CD8-positive, alpha-beta T cell (primary cell): ENCODE measurements at regions of chr9 and their contacts with region 1.

Region 1: GRCh38 chr9:69035438-69036308 is at the start of gene FXN:
- DNase-seq: peak; percentile 64 to 90 (median 80)
- ATAC-seq: peak; percentile 87
- H3K4me3 ChIP-seq: peak within 1 kb of the TSS; percentile 51 to 81
- H3K4me3 Mint-ChIP-seq: peak within 1 kb of the TSS; percentile 97
- H3K27ac ChIP-seq: peak within 1 kb of the TSS; percentile 35 to 67
- H3K27ac Mint-ChIP-seq: peak within 1 kb of the TSS; percentile 92
- H3K4me1 ChIP-seq: peaks cover 14% of the 10 kb centered on the region
- H3K4me1 Mint-ChIP-seq: peaks cover 28% of the 10 kb centered on the region
- H3K27me3 ChIP-seq: no peaks in the 10 kb centered on the region
- H3K27me3 Mint-ChIP-seq: no peaks in the 10 kb centered on the region
- CTCF ChIP-seq: peak; percentile 96
- total RNA-seq, gene FXN: 9.7 to 13.1 TPM

Region 2: DNA sequence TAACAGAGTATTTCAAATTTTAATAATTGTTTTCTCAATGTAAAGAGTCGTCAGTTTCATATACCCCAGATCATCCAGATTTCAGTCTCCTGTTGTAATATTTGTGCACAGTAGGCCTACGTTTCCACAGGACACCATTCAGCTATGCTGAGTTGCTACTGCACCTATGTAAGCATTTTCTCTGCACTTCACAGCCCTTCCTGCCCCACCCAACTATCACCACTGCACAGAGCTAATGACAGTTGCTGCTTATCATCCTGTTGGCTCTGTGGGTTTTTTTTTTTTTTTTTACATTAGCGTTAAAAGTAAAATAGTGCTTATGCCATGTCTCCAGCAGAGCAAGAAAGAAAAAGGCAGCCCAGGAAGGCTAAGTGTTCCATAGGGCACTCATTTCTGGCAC is 15.9 kb before region 1 on chr9:
- CTCF ChIA-PET with region 1: interaction called, 14 read pairs
- POLR2A ChIA-PET with region 1: interaction called, 8 read pairs
- intact Hi-C with region 1: no loop called
- DNase-seq: peak in 8 of 9 experiments; percentile 17 to 72 (median 42)
- ATAC-seq: peak; percentile 93
- H3K4me3 ChIP-seq: no peak overlapping the region
- H3K4me3 Mint-ChIP-seq: peak overlapping the region; percentile 42
- H3K27ac ChIP-seq: no peak overlapping the region
- H3K27ac Mint-ChIP-seq: no peak overlapping the region
- H3K4me1 ChIP-seq: peaks cover 22% of the 10 kb centered on the region
- H3K4me1 Mint-ChIP-seq: peaks cover 19% of the 10 kb centered on the region
- H3K27me3 ChIP-seq: no peaks in the 10 kb centered on the region
- H3K27me3 Mint-ChIP-seq: no peaks in the 10 kb centered on the region
- CTCF ChIP-seq: no peak

Region 3: GRCh38 chr9:69190086-69190862 is 154.6 kb after region 1 on chr9:
- CTCF ChIA-PET with region 1: interaction called, 8 read pairs
- POLR2A ChIA-PET with region 1: no interaction called
- intact Hi-C with region 1: loop called (anchors 1 to 5 kb)
- DNase-seq: no peak
- ATAC-seq: no peak
- H3K4me3 ChIP-seq: no peak overlapping the region
- H3K4me3 Mint-ChIP-seq: no peak overlapping the region
- H3K27ac ChIP-seq: no peak overlapping the region
- H3K27ac Mint-ChIP-seq: no peak overlapping the region
- H3K4me1 ChIP-seq: no peaks in the 10 kb centered on the region
- H3K4me1 Mint-ChIP-seq: peaks cover 6% of the 10 kb centered on the region
- H3K27me3 ChIP-seq: no peaks in the 10 kb centered on the region
- H3K27me3 Mint-ChIP-seq: no peaks in the 10 kb centered on the region
- CTCF ChIP-seq: no peak